ENCODE measurements at regions of chr2 and their contacts with region 1.

Region 1: DNA sequence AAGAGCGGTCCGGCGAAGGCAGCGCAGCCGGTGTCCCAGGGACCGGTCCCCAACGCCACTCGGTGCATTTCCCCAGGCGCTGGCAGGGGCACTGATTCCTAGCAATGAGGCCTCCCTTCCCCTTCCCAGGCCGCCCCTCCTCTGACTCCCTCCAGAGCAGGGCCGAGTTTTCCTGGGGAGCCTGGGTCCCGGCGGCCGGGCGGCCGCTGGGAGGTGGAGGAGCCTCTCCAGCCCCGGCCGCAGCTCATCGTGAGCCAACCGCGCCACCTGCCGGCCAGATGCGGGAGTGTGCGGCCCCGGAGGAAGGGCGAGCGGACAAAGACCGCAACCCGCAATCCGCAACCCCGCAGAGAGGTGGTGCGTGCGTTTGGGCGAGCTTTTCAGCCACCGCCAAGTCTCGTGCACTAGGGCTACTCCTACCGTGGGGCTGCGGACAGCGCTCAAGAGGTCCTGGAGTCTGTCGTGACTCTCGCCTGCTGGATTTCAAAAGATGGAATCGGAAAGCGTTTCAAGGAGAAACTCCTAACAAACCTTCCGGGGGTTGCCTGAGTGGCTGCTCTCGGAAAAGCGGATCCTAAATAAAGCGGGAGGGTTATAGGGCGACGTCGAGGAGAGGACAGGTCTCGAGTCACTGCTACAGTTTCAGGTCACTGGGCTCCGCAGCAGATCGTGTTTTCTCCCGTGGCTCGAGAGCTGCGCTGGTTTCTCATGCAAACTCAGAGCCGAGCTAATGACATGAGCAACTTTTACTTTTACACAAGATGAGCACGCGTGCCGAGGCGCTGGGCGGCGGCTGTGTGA is 1.5 kb upstream of the EPHA4 start:
- DNase-seq: peak; percentile 69 to 84 (median 76)
- H3K4me3 ChIP-seq: peak overlapping the region; percentile 58
- H3K4me3 Mint-ChIP-seq: peak overlapping the region; percentile 78 to 93 (median 92)
- H3K27ac ChIP-seq: no peak overlapping the region
- H3K27ac Mint-ChIP-seq: peak overlapping the region in 7 of 8 donors; percentile 31 to 83 (median 55)
- H3K4me1 ChIP-seq: peaks cover 20% of the 10 kb centered on the region
- H3K4me1 Mint-ChIP-seq: peaks cover 29 to 36% (median 34%) of the 10 kb centered on the region in 3 donors
- H3K27me3 ChIP-seq: peaks cover 16% of the 10 kb centered on the region
- H3K27me3 Mint-ChIP-seq: peaks cover 36 to 50% of the 10 kb centered on the region in 2 donors

Region 2: GRCh38 chr2:220687231-220687843 is 886.3 kb before region 1 on chr2:
- CTCF ChIA-PET with region 1: interaction called, 14 read pairs
- POLR2A ChIA-PET with region 1: no interaction called
- DNase-seq: peak; percentile 21 to 71 (median 40)
- H3K4me3 ChIP-seq: no peak overlapping the region
- H3K4me3 Mint-ChIP-seq: peak overlapping the region in 1 of 7 donors; percentile 45
- H3K27ac ChIP-seq: no peak overlapping the region
- H3K27ac Mint-ChIP-seq: no peak overlapping the region
- H3K4me1 ChIP-seq: no peaks in the 10 kb centered on the region
- H3K4me1 Mint-ChIP-seq: no peaks in the 10 kb centered on the region
- H3K27me3 ChIP-seq: peaks cover 4% of the 10 kb centered on the region
- H3K27me3 Mint-ChIP-seq: peaks cover 13 to 20% of the 10 kb centered on the region in 2 donors

Region 3: DNA sequence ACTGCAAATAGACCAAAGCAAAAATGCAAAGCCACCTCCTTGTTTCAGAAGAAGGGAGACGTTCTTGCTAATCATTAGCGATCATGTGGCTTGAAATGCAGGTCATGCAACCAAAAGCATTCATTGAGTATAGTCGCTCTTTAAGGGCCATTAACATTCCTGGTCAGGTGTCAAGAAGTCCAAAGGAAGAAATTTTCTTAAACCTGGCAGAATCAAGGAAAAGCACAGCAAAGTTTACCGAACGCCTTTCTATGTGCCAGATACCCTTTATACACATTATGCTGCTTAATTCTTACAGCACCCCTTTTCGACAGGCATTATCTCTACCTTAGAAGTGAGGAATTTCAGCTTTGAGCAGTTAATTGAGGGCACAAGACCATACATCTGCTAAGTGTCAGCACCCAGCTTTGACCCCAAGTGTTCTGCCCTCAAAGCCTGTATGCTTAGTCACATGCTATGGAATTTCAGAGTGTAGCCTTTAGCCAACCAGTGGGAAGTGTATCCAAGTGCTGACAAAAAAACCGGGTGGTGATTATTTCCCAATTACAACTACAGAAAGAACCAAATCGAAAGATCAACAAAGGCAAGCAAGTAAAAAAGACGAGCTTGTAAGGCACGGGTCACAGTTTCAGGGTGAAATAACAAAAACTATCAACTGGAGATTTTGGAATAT is 72.3 kb before region 1 on chr2:
- CTCF ChIA-PET with region 1: interaction called, 15 read pairs
- POLR2A ChIA-PET with region 1: interaction called, 3 read pairs
- DNase-seq: no peak
- H3K4me3 ChIP-seq: no peak overlapping the region
- H3K4me3 Mint-ChIP-seq: no peak overlapping the region
- H3K27ac ChIP-seq: no peak overlapping the region
- H3K27ac Mint-ChIP-seq: peak overlapping the region in 1 of 8 donors; percentile 31
- H3K4me1 ChIP-seq: no peaks in the 10 kb centered on the region
- H3K4me1 Mint-ChIP-seq: peaks cover 29 to 46% (median 45%) of the 10 kb centered on the region in 3 donors
- H3K27me3 ChIP-seq: no peaks in the 10 kb centered on the region
- H3K27me3 Mint-ChIP-seq: no peaks in the 10 kb centered on the region

Region 4: DNA sequence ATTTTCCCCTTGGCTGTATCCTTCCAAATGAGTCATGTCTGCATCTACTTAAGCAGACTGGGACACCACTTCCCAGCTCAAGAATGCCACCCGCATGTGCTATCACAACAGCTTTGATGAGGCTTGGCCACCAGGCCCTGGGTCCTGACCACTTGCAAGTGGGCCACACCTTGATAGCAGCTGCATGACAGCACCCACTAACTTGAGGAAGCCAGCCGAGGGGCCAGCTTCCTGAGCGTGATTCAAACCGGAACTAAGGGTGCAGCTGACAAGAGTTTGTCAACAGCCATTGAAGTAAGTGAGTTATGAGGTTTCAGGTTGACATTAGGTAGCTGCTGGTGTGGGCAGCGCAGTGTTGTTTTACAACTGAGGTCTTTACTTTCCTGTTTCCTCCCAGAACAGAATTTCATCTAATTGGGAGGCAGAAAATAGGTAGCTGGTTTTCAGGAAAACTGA is 55.9 kb before region 1 on chr2:
- CTCF ChIA-PET with region 1: interaction called, 23 read pairs
- POLR2A ChIA-PET with region 1: interaction called, 16 read pairs
- DNase-seq: peak; percentile 65 to 94 (median 71)
- H3K4me3 ChIP-seq: peak overlapping the region; percentile 47
- H3K4me3 Mint-ChIP-seq: no peak overlapping the region
- H3K27ac ChIP-seq: peak overlapping the region; percentile 97
- H3K27ac Mint-ChIP-seq: no peak overlapping the region
- H3K4me1 ChIP-seq: peaks cover 48% of the 10 kb centered on the region
- H3K4me1 Mint-ChIP-seq: peaks cover 20 to 30% (median 28%) of the 10 kb centered on the region in 3 donors
- H3K27me3 ChIP-seq: no peaks in the 10 kb centered on the region
- H3K27me3 Mint-ChIP-seq: no peaks in the 10 kb centered on the region

Region 5: DNA sequence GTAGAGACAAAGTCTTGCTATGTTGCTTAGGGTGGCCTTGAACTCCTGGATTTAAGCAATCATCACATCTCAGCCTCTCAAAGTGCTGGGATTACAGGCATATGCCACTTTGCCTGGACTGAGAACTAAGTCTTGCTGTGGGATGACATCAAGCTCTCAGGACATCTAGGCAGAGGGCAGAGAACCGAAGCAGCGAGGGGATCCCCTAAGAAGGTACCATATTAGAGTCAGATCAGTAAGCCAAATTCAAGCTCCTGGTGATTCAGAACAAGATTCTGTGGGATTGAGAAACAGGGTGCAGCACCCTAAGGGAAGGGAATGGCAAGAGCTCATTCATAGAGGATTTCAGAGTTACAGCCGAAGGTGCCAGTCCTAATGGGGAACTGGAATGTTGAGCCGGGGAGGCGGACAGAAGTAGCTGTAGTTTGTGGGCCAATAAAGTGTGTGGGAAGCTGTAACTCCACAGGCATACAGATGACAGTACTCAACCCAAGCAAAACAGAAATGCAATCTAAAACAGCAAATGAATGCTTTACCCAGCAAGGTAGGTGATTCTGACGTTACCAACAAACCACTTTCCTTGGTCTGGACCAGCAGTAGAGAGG is 32.4 kb before region 1 on chr2:
- CTCF ChIA-PET with region 1: no interaction called
- POLR2A ChIA-PET with region 1: no interaction called
- DNase-seq: no peak
- H3K4me3 ChIP-seq: no peak overlapping the region
- H3K4me3 Mint-ChIP-seq: no peak overlapping the region
- H3K27ac ChIP-seq: no peak overlapping the region
- H3K27ac Mint-ChIP-seq: peak overlapping the region in 2 of 8 donors; percentile 2 to 24
- H3K4me1 ChIP-seq: no peaks in the 10 kb centered on the region
- H3K4me1 Mint-ChIP-seq: peaks cover 15 to 47% (median 16%) of the 10 kb centered on the region in 3 donors
- H3K27me3 ChIP-seq: no peaks in the 10 kb centered on the region
- H3K27me3 Mint-ChIP-seq: peaks cover 0 to 4% of the 10 kb centered on the region in 2 donors

Region 6: DNA sequence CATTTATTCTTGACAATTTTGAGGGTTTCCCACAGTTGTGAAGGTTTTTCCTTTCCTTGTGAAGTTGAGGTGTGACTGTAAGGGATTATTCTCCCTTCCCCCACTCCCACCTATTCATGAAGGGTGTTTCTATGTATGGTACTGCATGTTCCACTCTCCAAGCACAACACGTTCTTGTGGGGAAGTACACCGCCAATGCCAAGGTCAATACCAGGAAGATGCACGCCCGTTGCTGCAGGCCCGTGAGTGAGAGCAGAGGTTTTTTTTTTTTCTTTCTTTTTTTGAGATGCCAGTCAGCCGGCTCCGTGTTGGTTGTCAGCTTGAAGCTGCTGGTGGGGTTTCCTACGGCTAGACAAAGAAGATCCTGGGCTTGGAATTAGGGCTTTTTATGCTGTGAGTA is 37.0 kb after region 1 on chr2:
- CTCF ChIA-PET with region 1: no interaction called
- POLR2A ChIA-PET with region 1: no interaction called
- DNase-seq: no peak
- H3K4me3 ChIP-seq: no peak overlapping the region
- H3K4me3 Mint-ChIP-seq: no peak overlapping the region
- H3K27ac ChIP-seq: no peak overlapping the region
- H3K27ac Mint-ChIP-seq: peak overlapping the region in 1 of 8 donors; percentile 84
- H3K4me1 ChIP-seq: no peaks in the 10 kb centered on the region
- H3K4me1 Mint-ChIP-seq: no peaks in the 10 kb centered on the region
- H3K27me3 ChIP-seq: no peaks in the 10 kb centered on the region
- H3K27me3 Mint-ChIP-seq: peaks cover 9 to 22% of the 10 kb centered on the region in 2 donors

Region 7: DNA sequence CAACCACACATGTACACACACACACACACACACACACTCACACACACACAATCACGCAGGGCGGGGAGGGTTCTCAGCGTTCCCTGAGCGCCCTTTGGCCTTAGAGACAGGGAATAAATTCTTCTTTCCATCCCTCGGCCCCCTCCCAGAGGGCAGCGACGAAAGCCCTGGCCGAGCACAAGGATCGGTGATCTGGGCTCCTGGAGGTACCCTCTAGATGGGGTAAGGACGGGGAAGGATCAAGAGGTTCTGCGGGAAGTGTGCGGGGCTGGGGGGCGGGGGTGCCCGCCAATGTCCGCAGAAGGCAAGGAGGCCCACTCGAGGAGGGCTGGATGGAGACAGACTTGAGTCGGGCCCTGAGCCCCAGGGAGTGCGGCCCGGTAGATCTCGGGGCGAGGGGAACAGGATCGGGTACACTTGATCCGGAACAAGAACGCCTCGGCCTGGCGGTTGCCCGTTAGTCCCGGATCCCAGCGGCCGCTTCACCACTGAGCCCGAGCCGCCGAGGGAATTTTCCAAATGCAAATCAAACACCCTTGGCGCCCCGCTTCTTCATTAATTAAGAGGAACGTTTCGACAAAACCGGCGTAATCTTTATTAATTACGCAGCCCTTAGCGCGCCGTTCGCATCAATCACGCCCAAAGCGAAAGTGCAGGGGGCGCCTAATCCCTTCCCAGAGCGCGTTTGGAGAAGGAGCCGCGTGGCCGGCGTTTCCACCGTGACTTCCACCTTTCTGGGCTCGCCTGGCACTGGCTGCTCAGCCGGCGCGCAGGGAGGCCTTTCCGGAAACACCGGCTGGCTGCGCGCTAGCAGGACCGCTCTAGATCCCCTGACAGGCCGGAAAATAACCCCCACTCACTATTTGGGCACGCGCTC is 732.1 kb after region 1 on chr2:
- CTCF ChIA-PET with region 1: no interaction called
- POLR2A ChIA-PET with region 1: no interaction called
- DNase-seq: no peak
- H3K4me3 ChIP-seq: peak overlapping the region; percentile 15
- H3K4me3 Mint-ChIP-seq: peak overlapping the region; percentile 66 to 90 (median 80)
- H3K27ac ChIP-seq: no peak overlapping the region
- H3K27ac Mint-ChIP-seq: no peak overlapping the region
- H3K4me1 ChIP-seq: peaks cover 7% of the 10 kb centered on the region
- H3K4me1 Mint-ChIP-seq: peaks cover 24 to 50% (median 48%) of the 10 kb centered on the region in 3 donors
- H3K27me3 ChIP-seq: peaks cover 81% of the 10 kb centered on the region
- H3K27me3 Mint-ChIP-seq: peaks cover 89 to 97% of the 10 kb centered on the region in 2 donors